Heart left ventricle (tissue), 16 donors: ENCODE measurements at regions of chr4 and their contacts with region 1.

Region 1: DNA sequence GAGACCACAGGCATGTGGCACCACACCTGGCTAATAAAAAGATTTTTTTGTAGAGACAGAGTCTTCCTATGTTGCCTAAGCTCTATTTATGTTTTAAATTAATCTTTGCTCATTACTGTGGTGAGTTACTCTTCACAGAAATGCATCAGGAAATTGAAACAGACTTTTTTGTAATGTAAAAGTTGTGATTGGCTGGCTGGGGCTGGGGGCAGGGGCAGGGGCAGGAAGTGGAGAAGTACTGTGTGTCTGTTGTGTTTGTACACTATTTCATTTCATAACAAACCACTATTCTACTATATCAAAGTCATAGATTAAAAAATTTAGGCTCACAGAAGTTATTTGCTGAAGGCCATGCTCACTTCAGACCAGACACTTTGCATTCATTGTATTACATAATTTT is 19.1 kb upstream of the ABRAXAS1 start:
- DNase-seq: no peak
- ATAC-seq: no peak
- H3K4me3 ChIP-seq: no peak overlapping the region
- H3K27ac ChIP-seq: no peak overlapping the region
- H3K4me1 ChIP-seq: no peaks in the 10 kb centered on the region
- H3K27me3 ChIP-seq: no peaks in the 10 kb centered on the region
- CTCF ChIP-seq: no peak
- POLR2A ChIP-seq: no peak

Region 2: DNA sequence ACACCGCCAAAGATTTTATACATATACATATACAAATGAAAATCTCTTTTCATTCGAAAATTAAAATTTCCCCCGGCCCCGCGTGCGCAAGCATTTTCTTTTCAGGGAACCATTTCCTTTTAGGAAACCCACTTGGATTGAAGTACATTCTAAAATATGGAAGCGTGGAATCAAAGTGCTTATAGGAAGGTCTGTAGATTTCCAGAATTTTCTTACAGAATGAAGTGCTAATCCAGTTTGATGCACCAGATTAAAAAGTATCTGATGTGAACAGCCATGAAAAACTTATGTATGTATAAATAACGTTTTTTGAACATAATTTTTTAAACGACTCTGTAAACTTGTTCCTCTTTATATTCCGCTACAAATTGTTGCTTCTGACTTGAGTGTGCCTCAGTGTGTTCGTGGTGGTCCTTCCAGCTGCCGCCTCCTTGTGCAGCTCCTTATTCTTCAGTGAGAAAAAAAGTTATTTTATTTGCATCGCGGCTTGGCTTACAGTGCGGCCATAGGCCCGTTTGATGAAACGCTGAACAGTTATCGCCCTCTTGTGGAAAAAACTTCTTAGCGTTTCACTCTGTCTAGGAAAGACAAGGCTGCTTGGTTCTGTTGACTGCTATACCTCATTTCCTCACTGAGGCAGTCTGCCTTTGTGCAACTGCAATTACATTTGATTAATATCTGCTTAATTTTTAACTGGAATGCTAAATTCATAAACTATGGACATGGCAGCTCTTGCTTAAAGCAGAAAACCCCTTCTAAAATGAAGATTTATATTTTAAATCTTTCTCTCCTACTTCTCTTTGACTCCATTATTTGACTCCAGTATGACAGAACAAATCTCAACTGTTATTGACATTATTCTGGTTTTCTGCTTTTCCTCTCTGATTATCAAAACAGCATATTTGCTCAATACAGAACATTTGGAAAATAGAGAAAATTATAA is 999.8 kb after region 1 on chr4:
- intact Hi-C with region 1: loop called in 1 of 10 experiments (anchors 10 kb)
- DNase-seq: no peak
- ATAC-seq: peak; percentile 61 to 79 (median 78)
- H3K4me3 ChIP-seq: no peak overlapping the region
- H3K27ac ChIP-seq: no peak overlapping the region
- H3K4me1 ChIP-seq: peaks cover 0 to 14% (median 8%) of the 10 kb centered on the region in 12 donors
- H3K27me3 ChIP-seq: peaks cover 48 to 100% (median 91%) of the 10 kb centered on the region in 9 donors
- CTCF ChIP-seq: peak; percentile 36 to 70 (median 54)
- POLR2A ChIP-seq: no peak